Natural killer cell (primary cell): ENCODE measurements at regions of chr18 and their contacts with region 1.

Region 1: GRCh38 chr18:63299837-63300745 is 19.5 kb downstream of the BCL2 start:
- DNase-seq: peak in 1 of 2 donors; percentile 53
- ATAC-seq: peak; percentile 77 to 82 (median 80)
- H3K4me3 ChIP-seq: no peak overlapping the region
- H3K4me3 Mint-ChIP-seq: peak overlapping the region; percentile 79
- H3K27ac ChIP-seq: peak overlapping the region; percentile 35
- H3K27ac Mint-ChIP-seq: peak overlapping the region; percentile 90 to 95
- H3K4me1 ChIP-seq: peaks cover 35% of the 10 kb centered on the region
- H3K4me1 Mint-ChIP-seq: peaks cover 68 to 69% of the 10 kb centered on the region in 2 donors
- H3K27me3 ChIP-seq: no peaks in the 10 kb centered on the region
- H3K27me3 Mint-ChIP-seq: no peaks in the 10 kb centered on the region
- CTCF ChIP-seq: no peak

Region 2: GRCh38 chr18:62992022-62992358 is 308.1 kb before region 1 on chr18:
- intact Hi-C with region 1: no loop called
- DNase-seq: no peak
- ATAC-seq: no peak
- H3K4me3 ChIP-seq: no peak overlapping the region
- H3K4me3 Mint-ChIP-seq: no peak overlapping the region
- H3K27ac ChIP-seq: no peak overlapping the region
- H3K27ac Mint-ChIP-seq: no peak overlapping the region
- H3K4me1 ChIP-seq: no peaks in the 10 kb centered on the region
- H3K4me1 Mint-ChIP-seq: no peaks in the 10 kb centered on the region
- H3K27me3 ChIP-seq: peaks cover 4% of the 10 kb centered on the region
- H3K27me3 Mint-ChIP-seq: peaks cover 10 to 17% of the 10 kb centered on the region in 2 donors
- CTCF ChIP-seq: no peak

Region 3: GRCh38 chr18:63267975-63268721 is 31.9 kb before region 1 on chr18:
- intact Hi-C with region 1: loop called (anchors 5 kb)
- DNase-seq: no peak
- ATAC-seq: peak; percentile 49 to 54 (median 52)
- H3K4me3 ChIP-seq: no peak overlapping the region
- H3K4me3 Mint-ChIP-seq: peak overlapping the region; percentile 69
- H3K27ac ChIP-seq: no peak overlapping the region
- H3K27ac Mint-ChIP-seq: peak overlapping the region; percentile 44 to 78
- H3K4me1 ChIP-seq: peaks cover 19% of the 10 kb centered on the region
- H3K4me1 Mint-ChIP-seq: peaks cover 41 to 42% of the 10 kb centered on the region in 2 donors
- H3K27me3 ChIP-seq: no peaks in the 10 kb centered on the region
- H3K27me3 Mint-ChIP-seq: no peaks in the 10 kb centered on the region
- CTCF ChIP-seq: no peak

Region 4: DNA sequence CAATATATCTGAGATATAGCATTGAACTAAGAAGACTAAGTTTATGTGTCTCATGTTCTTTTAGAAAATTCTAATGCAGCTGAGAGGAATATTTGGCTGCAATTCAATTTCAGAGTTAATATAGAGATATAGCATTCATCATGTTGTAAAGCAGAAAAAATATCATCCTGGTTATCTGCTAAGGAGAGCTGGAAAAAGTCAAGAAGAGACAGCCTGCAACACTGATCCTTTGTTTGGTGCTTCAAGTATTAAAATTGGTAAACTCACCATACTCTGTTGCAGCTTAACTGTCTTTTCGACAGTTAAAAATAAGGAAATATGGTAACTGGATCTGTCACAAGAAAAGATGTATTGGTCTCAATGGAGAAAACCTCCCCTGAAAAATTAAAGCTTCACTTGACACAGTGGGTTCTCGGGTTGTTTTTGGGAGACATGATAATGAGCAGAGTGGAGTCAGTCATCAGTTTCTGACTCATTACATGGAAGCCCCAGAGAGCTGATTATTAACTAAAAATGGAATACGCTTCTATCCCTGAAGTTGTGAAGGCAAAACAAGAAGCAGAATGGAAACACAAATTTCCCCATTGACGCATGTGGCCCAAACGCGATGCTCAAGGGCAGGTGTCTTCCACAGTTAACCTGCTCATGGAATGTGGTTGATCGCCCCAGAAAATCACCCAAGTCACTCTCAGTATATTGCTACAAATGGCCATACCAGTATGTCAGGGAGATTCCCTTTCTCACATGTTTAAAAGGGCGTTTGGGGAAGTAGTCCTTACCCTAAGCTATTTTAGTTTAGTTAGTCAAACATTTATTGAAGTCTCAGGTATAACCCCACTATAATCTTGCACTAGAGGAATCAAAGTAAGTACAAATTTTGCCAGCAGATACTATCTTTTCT is 11.3 kb after region 1 on chr18:
- intact Hi-C with region 1: no loop called
- DNase-seq: peak in 1 of 2 donors; percentile 20
- ATAC-seq: no peak
- H3K4me3 ChIP-seq: no peak overlapping the region
- H3K4me3 Mint-ChIP-seq: no peak overlapping the region
- H3K27ac ChIP-seq: peak overlapping the region; percentile 61
- H3K27ac Mint-ChIP-seq: peak overlapping the region; percentile 53 to 93
- H3K4me1 ChIP-seq: peaks cover 14% of the 10 kb centered on the region
- H3K4me1 Mint-ChIP-seq: peaks cover 76 to 91% of the 10 kb centered on the region in 2 donors
- H3K27me3 ChIP-seq: no peaks in the 10 kb centered on the region
- H3K27me3 Mint-ChIP-seq: no peaks in the 10 kb centered on the region
- CTCF ChIP-seq: no peak